Activated B cell treated with CpG ODN at 0.5 μM for 24 hours (primary cell): ENCODE measurements at regions of chr15 and their contacts with region 1.

Region 1: DNA sequence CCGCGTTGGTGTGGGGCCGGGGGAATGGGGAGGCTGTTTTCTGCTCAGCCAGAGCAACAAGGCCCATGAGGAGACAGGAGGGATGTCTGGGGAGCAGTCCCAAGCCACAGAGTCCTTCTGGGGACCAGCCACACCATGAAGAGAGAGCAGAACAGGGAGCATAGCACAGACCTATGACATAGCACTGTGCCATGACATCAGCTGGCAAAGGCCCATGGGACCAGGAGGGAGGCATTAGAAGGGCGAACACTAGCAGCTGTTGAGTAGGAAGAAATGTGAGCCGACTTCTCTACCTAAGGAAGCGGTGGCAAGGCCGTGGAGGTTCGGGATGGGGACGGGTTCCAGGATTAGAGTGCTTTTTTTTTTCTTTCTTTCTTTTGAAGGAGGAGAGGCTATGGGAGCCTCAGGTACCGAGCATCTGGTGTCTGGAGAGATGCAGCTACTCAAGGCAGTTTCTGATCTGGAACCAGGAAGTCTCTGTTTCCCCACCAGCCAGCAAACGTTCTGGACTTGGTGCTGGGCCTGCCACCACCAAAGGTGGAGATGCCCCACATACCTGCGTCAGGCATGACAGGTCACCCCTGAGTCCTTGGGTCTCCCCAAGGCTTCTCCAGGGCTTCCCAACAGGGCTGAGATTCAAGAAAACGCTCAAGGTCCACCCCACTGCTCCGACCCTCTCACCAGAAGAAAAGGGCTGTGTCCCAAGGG is 77.3 kb upstream of the CGNL1 start:
- DNase-seq: peak; percentile 42
- ATAC-seq: no peak
- H3K4me3 Mint-ChIP-seq: peak overlapping the region; percentile 97
- H3K27ac Mint-ChIP-seq: peak overlapping the region; percentile 99
- H3K4me1 Mint-ChIP-seq: peaks cover 57% of the 10 kb centered on the region
- H3K27me3 Mint-ChIP-seq: no peaks in the 10 kb centered on the region
- CTCF ChIP-seq: no peak

Region 2: GRCh38 chr15:56886932-56887781 is 411.8 kb before region 1 on chr15:
- CTCF ChIA-PET with region 1: no interaction called
- POLR2A ChIA-PET with region 1: no interaction called
- intact Hi-C with region 1: loop called (anchors 2 kb)
- DNase-seq: peak; percentile 81
- ATAC-seq: peak; percentile 85
- H3K4me3 Mint-ChIP-seq: peak overlapping the region; percentile 87
- H3K27ac Mint-ChIP-seq: peak overlapping the region; percentile 91
- H3K4me1 Mint-ChIP-seq: peaks cover 28% of the 10 kb centered on the region
- H3K27me3 Mint-ChIP-seq: no peaks in the 10 kb centered on the region
- CTCF ChIP-seq: no peak

Region 3: DNA sequence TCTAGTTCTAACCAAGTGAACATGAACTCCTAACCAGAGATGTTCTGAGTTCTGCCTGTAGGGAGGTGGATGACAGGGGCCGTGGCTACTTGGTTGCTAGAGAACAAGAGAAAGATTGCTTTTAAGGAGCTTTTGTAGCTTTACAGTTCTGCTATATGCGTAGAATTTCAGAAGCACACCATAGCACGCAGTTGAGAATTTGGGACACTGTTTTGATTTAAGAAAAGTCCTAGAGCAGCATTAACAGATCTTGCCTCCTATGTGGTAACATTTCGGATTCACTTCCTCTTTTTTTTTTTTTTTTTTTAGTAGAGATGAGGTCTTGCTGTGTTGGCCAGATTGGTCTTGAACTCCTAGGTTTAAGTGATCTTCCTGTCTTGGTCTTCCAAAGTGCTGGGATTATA is 198.9 kb before region 1 on chr15:
- CTCF ChIA-PET with region 1: no interaction called
- POLR2A ChIA-PET with region 1: no interaction called
- intact Hi-C with region 1: loop called (anchors 1 kb)
- DNase-seq: no peak
- ATAC-seq: peak; percentile 78
- H3K4me3 Mint-ChIP-seq: peak overlapping the region; percentile 64
- H3K27ac Mint-ChIP-seq: peak overlapping the region; percentile 83
- H3K4me1 Mint-ChIP-seq: peaks cover 50% of the 10 kb centered on the region
- H3K27me3 Mint-ChIP-seq: no peaks in the 10 kb centered on the region
- CTCF ChIP-seq: no peak

Region 4: DNA sequence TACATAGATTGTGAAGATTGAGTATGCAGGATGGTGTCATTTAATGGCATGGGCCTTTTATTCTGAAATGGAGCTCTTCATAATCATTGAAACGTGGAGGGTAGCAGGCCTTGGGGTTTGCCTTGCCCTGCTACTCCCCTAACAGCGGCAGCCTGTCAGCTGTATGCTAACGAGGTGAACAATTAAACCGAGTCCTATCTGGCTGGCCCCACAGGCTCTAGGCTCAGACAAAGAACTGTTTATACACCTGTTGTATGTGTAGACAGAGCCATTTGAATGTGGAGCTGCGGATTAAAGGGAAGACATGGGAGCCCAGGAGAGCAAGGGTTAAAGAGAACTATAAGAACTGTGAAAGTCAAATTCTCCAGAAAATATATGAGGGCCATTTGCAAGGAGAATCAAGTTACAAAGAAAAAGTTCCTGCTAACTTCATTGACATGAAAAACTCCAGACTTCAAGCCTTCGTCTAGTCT is 39.4 kb before region 1 on chr15:
- CTCF ChIA-PET with region 1: no interaction called
- POLR2A ChIA-PET with region 1: interaction called, 22 read pairs
- intact Hi-C with region 1: loop called (anchors 1 kb)
- DNase-seq: peak; percentile 28
- ATAC-seq: peak; percentile 99
- H3K4me3 Mint-ChIP-seq: peak overlapping the region; percentile 67
- H3K27ac Mint-ChIP-seq: peak overlapping the region; percentile 84
- H3K4me1 Mint-ChIP-seq: peaks cover 18% of the 10 kb centered on the region
- H3K27me3 Mint-ChIP-seq: no peaks in the 10 kb centered on the region
- CTCF ChIP-seq: no peak

Region 5: DNA sequence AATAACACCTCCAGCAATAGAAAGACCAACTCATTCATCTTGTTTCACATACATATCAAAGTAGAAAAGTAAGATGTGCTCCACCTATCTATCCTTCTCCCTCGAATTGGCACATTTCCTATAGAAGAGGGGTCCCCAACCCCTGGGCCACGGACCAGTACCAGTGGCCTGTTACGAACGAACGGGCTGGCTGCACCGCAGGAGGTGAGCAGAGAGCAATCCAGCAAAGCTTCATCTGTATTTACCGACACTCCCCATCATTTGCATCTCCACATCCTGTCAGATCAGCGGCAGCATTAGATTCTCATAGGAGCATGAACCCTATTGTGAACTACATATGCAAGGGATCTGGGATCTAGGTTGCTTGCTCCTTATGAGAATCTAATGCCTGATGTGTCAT is 17.7 kb before region 1 on chr15:
- CTCF ChIA-PET with region 1: interaction called, 7 read pairs
- POLR2A ChIA-PET with region 1: interaction called, 387 read pairs
- intact Hi-C with region 1: loop called (anchors 1 kb)
- DNase-seq: no peak
- ATAC-seq: peak; percentile 65
- H3K4me3 Mint-ChIP-seq: peak overlapping the region; percentile 83
- H3K27ac Mint-ChIP-seq: peak overlapping the region; percentile 98
- H3K4me1 Mint-ChIP-seq: peaks cover 79% of the 10 kb centered on the region
- H3K27me3 Mint-ChIP-seq: no peaks in the 10 kb centered on the region
- CTCF ChIP-seq: no peak